Activated CD4-positive, alpha-beta T cell treated with anti-CD3 and anti-CD28 coated beads for 36 hours (primary cell): ENCODE measurements at regions of chr17 and their contacts with region 1.

Region 1: GRCh38 chr17:81222906-81223761 is at the start of gene CEP131:
- DNase-seq: peak; percentile 100
- ATAC-seq: peak; percentile 98
- H3K4me3 Mint-ChIP-seq: peak within 1 kb of the TSS; percentile 50
- H3K27ac Mint-ChIP-seq: peak within 1 kb of the TSS; percentile 76
- H3K4me1 Mint-ChIP-seq: peaks cover 19% of the 10 kb centered on the region
- H3K27me3 Mint-ChIP-seq: no peaks in the 10 kb centered on the region
- total RNA-seq, gene CEP131: 7.6 to 9.5 TPM

Region 2: DNA sequence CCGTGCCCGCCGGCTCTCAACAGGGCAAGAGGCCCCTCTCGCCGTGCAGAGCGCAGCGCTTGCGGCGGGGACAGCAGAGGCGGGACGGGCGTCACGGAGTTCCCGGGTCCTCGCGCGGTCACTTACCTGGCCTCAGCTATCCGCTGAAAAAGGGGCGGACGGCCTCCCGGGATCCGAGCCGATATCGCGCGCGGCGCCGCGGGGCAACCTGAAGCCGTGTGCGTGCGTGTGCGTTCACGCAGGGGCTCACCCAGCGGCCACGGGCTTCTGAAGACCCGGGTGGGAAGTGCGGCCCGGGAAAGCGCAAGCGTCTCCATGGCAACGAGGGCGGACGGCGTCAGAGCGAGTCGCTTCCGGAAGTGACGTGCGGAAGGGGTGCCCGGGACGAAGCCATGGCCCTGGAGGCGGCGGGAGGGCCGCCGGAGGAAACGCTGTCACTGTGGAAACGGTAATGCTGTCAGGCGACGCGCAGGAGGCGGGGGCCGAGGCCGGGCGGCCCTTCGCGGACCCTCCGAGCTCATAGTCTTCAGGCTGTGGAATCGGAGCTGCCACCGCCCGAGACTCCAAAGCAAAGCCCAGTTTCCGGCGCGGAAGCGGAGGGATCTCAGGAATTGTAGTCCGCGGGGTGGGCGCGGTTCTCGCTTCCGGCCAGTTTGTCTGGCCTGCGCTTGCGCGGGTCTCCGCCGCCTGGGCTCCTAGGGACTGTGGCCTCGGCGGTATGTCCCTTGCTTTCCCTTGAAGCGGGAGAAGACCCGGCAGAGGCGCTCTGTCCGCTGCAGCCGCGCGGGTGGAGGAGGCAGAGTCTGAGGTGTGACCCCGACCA is 808.1 kb before region 1 on chr17 and contains the start of gene ENDOV:
- CTCF ChIA-PET with region 1: no interaction called
- POLR2A ChIA-PET with region 1: no interaction called
- intact Hi-C with region 1: loop called in 1 of 2 experiments (anchors 1 kb)
- DNase-seq: peak; percentile 95
- ATAC-seq: peak; percentile 96
- H3K4me3 Mint-ChIP-seq: peak within 1 kb of the TSS; percentile 81
- H3K27ac Mint-ChIP-seq: peak within 1 kb of the TSS; percentile 8
- H3K4me1 Mint-ChIP-seq: peaks cover 23% of the 10 kb centered on the region
- H3K27me3 Mint-ChIP-seq: peaks cover 16% of the 10 kb centered on the region
- total RNA-seq, gene ENDOV: 12.3 to 13.0 TPM

Region 3: GRCh38 chr17:81034779-81035388 is 188.2 kb before region 1 on chr17 and contains the start of gene BAIAP2:
- CTCF ChIA-PET with region 1: no interaction called
- POLR2A ChIA-PET with region 1: no interaction called
- intact Hi-C with region 1: loop called in 1 of 2 experiments (anchors 1 kb)
- DNase-seq: peak; percentile 99
- ATAC-seq: peak; percentile 91
- H3K4me3 Mint-ChIP-seq: peak within 1 kb of the TSS; percentile 72
- H3K27ac Mint-ChIP-seq: peak within 1 kb of the TSS; percentile 47
- H3K4me1 Mint-ChIP-seq: peaks cover 20% of the 10 kb centered on the region
- H3K27me3 Mint-ChIP-seq: peaks cover 19% of the 10 kb centered on the region
- total RNA-seq, gene BAIAP2: 4.6 to 5.0 TPM

Region 4: GRCh38 chr17:81238817-81239600 is 15.9 kb after region 1 on chr17 and contains the starts of genes NDUFAF8 and TEPSIN:
- CTCF ChIA-PET with region 1: interaction called, 7 read pairs
- POLR2A ChIA-PET with region 1: interaction called, 8 read pairs
- intact Hi-C with region 1: loop called (anchors 1 kb)
- DNase-seq: peak; percentile 97
- ATAC-seq: peak; percentile 99
- H3K4me3 Mint-ChIP-seq: peak within 1 kb of the TSS; percentile 93
- H3K27ac Mint-ChIP-seq: peak within 1 kb of the TSS; percentile 96
- H3K4me1 Mint-ChIP-seq: peaks cover 25% of the 10 kb centered on the region
- H3K27me3 Mint-ChIP-seq: no peaks in the 10 kb centered on the region
- total RNA-seq, gene NDUFAF8: 31.0 to 57.9 TPM
- total RNA-seq, gene TEPSIN: 17.8 to 20.3 TPM

Region 5: GRCh38 chr17:81346090-81346907 is 123.2 kb after region 1 on chr17:
- CTCF ChIA-PET with region 1: no interaction called
- POLR2A ChIA-PET with region 1: no interaction called
- intact Hi-C with region 1: loop called in 1 of 2 experiments (anchors 1 kb)
- DNase-seq: peak; percentile 98
- ATAC-seq: peak; percentile 93
- H3K4me3 Mint-ChIP-seq: peak overlapping the region; percentile 26
- H3K27ac Mint-ChIP-seq: no peak overlapping the region
- H3K4me1 Mint-ChIP-seq: peaks cover 19% of the 10 kb centered on the region
- H3K27me3 Mint-ChIP-seq: peaks cover 25% of the 10 kb centered on the region

Region 6: GRCh38 chr17:81553018-81553615 is 330.0 kb after region 1 on chr17:
- CTCF ChIA-PET with region 1: no interaction called
- POLR2A ChIA-PET with region 1: no interaction called
- intact Hi-C with region 1: loop called in 1 of 2 experiments (anchors 1 kb)
- DNase-seq: peak; percentile 91
- ATAC-seq: peak; percentile 78
- H3K4me3 Mint-ChIP-seq: peak overlapping the region; percentile 89
- H3K27ac Mint-ChIP-seq: peak overlapping the region; percentile 86
- H3K4me1 Mint-ChIP-seq: peaks cover 38% of the 10 kb centered on the region
- H3K27me3 Mint-ChIP-seq: no peaks in the 10 kb centered on the region